ENCODE measurements at regions of chr1 and their contacts with region 1.

Region 1: GRCh38 chr1:46036894-46037839 is 95.3 kb downstream of the PIK3R3 start:
- DNase-seq: peak; percentile 93 to 94
- H3K4me3 ChIP-seq: no peak overlapping the region
- H3K27ac ChIP-seq: peak overlapping the region in 1 of 5 donors; percentile 1
- H3K4me1 ChIP-seq: peaks cover 0 to 39% (median 12%) of the 10 kb centered on the region in 4 donors
- H3K27me3 ChIP-seq: no peaks in the 10 kb centered on the region
- CTCF ChIP-seq: peak in 6 of 7 experiments; percentile 84 to 98 (median 96)
- EP300 ChIP-seq: no peak
- POLR2A ChIP-seq: no peak

Region 2: GRCh38 chr1:46179138-46180081 is 142.2 kb after region 1 on chr1:
- intact Hi-C with region 1: loop called (anchors 5 kb)
- DNase-seq: peak; percentile 87 to 95
- H3K4me3 ChIP-seq: no peak overlapping the region
- H3K27ac ChIP-seq: peak overlapping the region; percentile 85 to 90 (median 88)
- H3K4me1 ChIP-seq: peaks cover 28 to 60% (median 45%) of the 10 kb centered on the region in 4 donors
- H3K27me3 ChIP-seq: no peaks in the 10 kb centered on the region
- CTCF ChIP-seq: peak in 5 of 7 experiments; percentile 75 to 99 (median 87)
- EP300 ChIP-seq: no peak
- POLR2A ChIP-seq: no peak

Measured in stomach (tissue), 19 donors.